Dendritic cell treated with granulocyte-macrophage colony-stimulating factor and Interleukin-4, amounts not matched to agents 40 ng/mL and 50 ng/mL, for 4 days (primary cell): ENCODE measurements at regions of chr9 and their contacts with region 1.

Region 1: DNA sequence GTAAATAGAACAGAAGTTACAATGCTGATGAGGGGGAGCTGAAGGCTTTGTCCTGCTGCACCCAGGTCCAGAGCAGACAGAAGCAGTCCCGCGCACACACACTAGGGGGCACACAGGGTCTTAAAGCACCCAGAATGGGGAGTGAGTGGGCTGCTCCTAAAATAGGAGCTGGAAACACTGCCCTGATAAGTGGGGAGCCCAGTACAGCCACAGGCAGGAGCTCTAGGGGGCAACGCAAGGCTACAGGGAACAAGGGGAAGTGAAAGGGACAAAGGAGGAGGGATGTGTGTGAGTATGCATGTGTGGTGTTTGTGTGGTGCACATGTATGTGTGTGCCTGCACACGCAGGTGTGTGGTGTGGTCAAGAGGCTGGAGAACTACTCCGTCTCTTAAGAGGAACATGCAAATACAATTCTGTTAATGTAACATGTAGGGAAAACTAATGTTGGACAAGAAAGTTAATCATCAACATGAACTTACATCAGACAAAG is 191.5 kb downstream of the ROR2 start:
- H3K4me3 Mint-ChIP-seq: no peak overlapping the region
- H3K27ac Mint-ChIP-seq: no peak overlapping the region
- H3K4me1 Mint-ChIP-seq: peaks cover 5% of the 10 kb centered on the region
- H3K27me3 Mint-ChIP-seq: peaks cover 8% of the 10 kb centered on the region

Region 2: GRCh38 chr9:91421128-91421765 is 337.3 kb before region 1 on chr9:
- intact Hi-C with region 1: no loop called
- H3K4me3 Mint-ChIP-seq: peak overlapping the region; percentile 92
- H3K27ac Mint-ChIP-seq: peak overlapping the region; percentile 96
- H3K4me1 Mint-ChIP-seq: peaks cover 50% of the 10 kb centered on the region
- H3K27me3 Mint-ChIP-seq: no peaks in the 10 kb centered on the region

Region 3: DNA sequence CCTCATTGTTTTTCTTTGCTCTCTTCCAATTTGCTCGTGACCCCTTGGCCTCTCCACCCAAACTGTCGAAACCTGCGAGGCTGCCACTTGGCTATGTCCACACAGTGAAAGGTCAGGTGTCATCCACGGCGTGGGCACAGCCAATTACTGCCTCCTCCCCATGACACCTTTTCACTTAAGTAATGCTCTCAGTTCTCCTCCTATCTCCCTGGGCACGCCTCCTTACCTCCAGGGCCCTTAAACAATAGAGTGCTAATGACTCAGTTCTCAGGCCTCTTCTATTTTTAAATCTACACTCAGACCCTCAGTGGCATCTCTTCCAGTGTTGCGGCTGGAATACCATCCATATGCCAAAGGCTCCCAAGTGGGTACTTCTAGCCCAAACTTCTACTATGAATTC is 65.3 kb before region 1 on chr9:
- intact Hi-C with region 1: no loop called
- H3K4me3 Mint-ChIP-seq: no peak overlapping the region
- H3K27ac Mint-ChIP-seq: no peak overlapping the region
- H3K4me1 Mint-ChIP-seq: no peaks in the 10 kb centered on the region
- H3K27me3 Mint-ChIP-seq: peaks cover 5% of the 10 kb centered on the region

Region 4: GRCh38 chr9:91884696-91885687 is 126.5 kb after region 1 on chr9:
- intact Hi-C with region 1: loop called (anchors 5 kb)
- H3K4me3 Mint-ChIP-seq: no peak overlapping the region
- H3K27ac Mint-ChIP-seq: no peak overlapping the region
- H3K4me1 Mint-ChIP-seq: peaks cover 17% of the 10 kb centered on the region
- H3K27me3 Mint-ChIP-seq: peaks cover 30% of the 10 kb centered on the region